ENCODE measurements at regions of chr16 and their contacts with region 1.

Region 1: GRCh38 chr16:71484006-71484893 is 4.9 kb downstream of the ZNF19 start:
- H3K4me3 Mint-ChIP-seq: peak overlapping the region; percentile 85
- H3K27ac Mint-ChIP-seq: peak overlapping the region; percentile 87
- H3K4me1 Mint-ChIP-seq: peaks cover 16% of the 10 kb centered on the region
- H3K27me3 Mint-ChIP-seq: peaks cover 3% of the 10 kb centered on the region

Region 2: GRCh38 chr16:71461686-71462648 is 22.3 kb before region 1 on chr16 and contains the start of gene ZNF23:
- intact Hi-C with region 1: loop called (anchors 1 kb)
- H3K4me3 Mint-ChIP-seq: peak within 1 kb of the TSS; percentile 91
- H3K27ac Mint-ChIP-seq: peak within 1 kb of the TSS; percentile 81
- H3K4me1 Mint-ChIP-seq: peaks cover 5% of the 10 kb centered on the region
- H3K27me3 Mint-ChIP-seq: peaks cover 1% of the 10 kb centered on the region

Measured in dendritic cell treated with granulocyte-macrophage colony-stimulating factor and Interleukin-4, amounts not matched to agents 40 ng/mL and 50 ng/mL, for 4 days (primary cell).